Endothelial cell of umbilical vein (primary cell): ENCODE measurements at regions of chr17 and their contacts with region 1.

Region 1: DNA sequence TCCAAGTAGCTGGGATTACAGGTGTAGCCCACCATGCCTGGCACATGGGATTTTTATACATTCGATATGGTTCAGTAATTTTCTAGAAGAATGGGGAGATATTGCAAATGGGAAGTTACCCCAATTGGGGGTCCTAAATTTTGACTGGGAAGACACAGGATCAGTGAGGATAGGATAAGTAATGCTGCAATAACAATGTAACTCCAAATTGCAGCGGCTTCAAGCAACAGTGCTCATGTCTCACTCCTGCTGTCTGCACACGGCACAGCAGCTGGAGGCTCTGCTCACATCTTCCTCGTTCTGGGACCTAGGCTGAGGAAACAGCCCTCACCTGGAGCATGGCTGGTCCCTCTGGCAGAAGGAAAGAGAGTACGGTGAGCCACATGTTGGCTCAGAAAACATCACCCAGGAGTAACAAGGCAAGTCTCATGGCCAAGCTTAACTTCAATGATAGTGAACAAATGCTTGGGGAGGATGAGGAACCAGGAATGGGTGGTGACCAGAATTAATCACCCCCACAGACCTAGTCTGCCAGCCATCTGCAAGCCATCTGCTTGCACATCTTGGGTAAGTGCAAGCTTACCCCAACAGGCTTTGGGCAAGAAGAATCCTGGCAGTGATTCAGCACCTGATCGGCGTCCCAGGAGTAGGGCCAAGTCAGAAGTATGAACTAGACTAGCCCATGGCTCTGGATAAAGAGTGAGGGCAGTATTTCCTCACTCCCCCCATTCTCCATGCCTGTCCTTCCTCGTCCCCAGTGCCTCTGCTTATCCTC is 229.2 kb downstream of the COPRS start:
- DNase-seq: no peak
- H3K4me3 ChIP-seq: no peak overlapping the region
- H3K27ac ChIP-seq: no peak overlapping the region
- H3K4me1 ChIP-seq: peaks cover 6% of the 10 kb centered on the region
- H3K27me3 ChIP-seq: no peaks in the 10 kb centered on the region
- CTCF ChIP-seq: no peak
- POLR2A ChIP-seq: no peak

Region 2: DNA sequence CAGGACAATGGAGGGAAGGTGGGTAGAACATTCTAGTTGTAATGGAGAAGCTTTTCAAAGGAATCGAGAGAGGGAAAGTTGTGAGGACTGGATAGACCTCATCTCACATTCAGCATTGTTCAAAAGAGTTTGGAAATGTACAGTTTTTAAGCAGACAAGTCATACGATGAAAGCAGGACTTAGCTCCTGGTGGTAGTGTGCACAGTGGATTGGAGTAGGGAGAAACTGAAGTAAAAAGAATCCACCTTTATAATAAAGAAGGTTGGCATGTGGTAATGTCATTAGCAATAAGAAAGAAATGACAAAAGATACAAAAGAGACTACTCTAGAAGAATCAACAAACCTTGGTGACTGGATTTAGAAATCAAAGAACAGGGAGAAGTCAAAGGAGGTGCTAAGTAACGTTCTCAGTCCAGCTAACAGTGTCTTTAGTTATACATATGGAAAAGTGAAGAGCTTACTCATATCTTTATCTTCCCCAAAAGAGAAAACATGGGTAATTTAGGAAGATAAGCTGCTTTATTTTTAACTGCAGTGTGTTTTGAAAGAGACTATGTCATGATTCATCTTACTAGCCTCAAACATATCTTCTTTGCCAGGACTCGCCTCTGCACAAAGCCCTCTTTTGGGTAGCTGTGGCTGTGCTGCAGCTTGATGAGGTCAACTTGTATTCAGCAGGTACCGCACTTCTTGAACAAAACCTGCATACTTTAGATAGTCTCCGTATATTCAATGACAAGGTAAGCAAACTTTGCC is 289.8 kb before region 1 on chr17:
- CTCF ChIA-PET with region 1: no interaction called
- POLR2A ChIA-PET with region 1: no interaction called
- dilution Hi-C with region 1: no loop called
- intact Hi-C with region 1: no loop called
- DNase-seq: no peak
- H3K4me3 ChIP-seq: no peak overlapping the region
- H3K27ac ChIP-seq: no peak overlapping the region
- H3K4me1 ChIP-seq: no peaks in the 10 kb centered on the region
- H3K27me3 ChIP-seq: no peaks in the 10 kb centered on the region
- CTCF ChIP-seq: no peak
- POLR2A ChIP-seq: no peak

Region 3: DNA sequence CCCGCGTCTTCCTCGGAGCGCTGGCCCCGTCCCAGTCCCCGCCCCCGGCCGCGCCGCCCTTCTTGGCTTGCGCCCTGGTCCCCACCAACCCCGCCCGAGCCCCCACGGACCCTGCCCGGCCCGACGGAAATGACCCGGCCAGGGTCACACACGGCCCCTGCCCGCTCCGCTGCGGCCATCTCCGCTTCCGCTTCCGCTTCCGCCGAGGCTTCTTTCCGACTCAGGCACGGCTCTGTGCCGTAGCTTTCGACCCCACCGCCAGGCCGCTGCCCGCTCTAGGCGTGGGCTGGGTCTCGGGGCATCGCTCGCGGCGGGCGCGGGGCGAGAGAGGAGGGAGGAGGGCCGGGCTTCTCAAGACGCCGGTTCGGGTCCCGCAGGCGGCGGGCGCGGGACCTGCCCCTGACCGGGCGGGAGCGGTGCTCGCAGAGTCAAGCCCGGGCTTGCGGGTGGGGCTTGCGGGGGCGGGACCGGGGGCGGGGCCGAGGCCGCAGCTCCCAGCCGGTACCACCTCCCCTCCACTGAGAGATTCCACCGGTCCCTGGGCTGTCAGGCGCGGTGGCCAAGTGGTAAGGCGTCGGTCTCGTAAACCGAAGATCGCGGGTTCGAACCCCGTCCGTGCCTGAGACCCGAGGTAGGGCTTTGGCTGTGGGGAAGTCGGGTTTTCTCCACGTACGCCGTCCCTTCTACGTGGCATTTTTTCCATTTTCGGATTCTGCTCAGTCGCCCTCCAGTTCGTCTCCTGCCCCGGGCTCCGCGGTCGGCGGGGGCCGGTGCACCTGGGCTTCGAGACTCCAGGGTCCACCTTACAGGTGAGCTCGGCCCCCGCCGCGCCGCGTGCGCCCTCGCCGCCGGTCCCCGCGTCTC is 80.1 kb before region 1 on chr17:
- CTCF ChIA-PET with region 1: no interaction called
- POLR2A ChIA-PET with region 1: no interaction called
- dilution Hi-C with region 1: no loop called
- intact Hi-C with region 1: no loop called
- DNase-seq: peak; percentile 92
- H3K4me3 ChIP-seq: peak overlapping the region; percentile 54 to 66 (median 63)
- H3K27ac ChIP-seq: peak overlapping the region; percentile 2
- H3K4me1 ChIP-seq: peaks cover 3% of the 10 kb centered on the region
- H3K27me3 ChIP-seq: peaks cover 0 to 4% of the 10 kb centered on the region in 2 experiments
- CTCF ChIP-seq: no peak
- POLR2A ChIP-seq: peak; percentile 17

Region 4: DNA sequence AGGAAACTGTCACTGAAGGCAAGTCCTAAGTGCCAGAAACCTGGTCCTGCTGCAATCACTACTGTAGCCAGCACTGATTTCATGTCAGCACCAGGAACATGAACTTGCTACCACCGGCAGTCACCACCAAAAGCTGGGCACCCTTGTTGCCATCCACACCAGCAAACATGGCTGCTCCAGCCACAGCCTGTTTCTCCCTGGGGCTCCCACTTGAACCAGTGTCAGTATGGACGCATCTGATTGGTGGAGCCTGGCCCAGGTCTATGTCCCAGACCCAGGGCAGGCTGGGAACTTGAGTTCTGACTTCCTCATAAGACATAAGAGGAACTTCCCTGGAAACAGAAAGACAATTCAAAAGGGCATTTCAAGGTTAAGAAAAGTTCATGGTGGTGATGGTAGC is 172.6 kb after region 1 on chr17:
- CTCF ChIA-PET with region 1: no interaction called
- POLR2A ChIA-PET with region 1: no interaction called
- dilution Hi-C with region 1: loop called (anchors 25 kb)
- intact Hi-C with region 1: no loop called
- DNase-seq: no peak
- H3K4me3 ChIP-seq: no peak overlapping the region
- H3K27ac ChIP-seq: no peak overlapping the region
- H3K4me1 ChIP-seq: no peaks in the 10 kb centered on the region
- H3K27me3 ChIP-seq: peaks cover 3 to 4% of the 10 kb centered on the region in 2 experiments
- CTCF ChIP-seq: no peak
- POLR2A ChIP-seq: no peak